Activated naive CD4-positive, alpha-beta T cell treated with anti-CD3 and anti-CD28 coated beads for 36 hours (primary cell): ENCODE measurements at regions of chr6 and their contacts with region 1.

Region 1: DNA sequence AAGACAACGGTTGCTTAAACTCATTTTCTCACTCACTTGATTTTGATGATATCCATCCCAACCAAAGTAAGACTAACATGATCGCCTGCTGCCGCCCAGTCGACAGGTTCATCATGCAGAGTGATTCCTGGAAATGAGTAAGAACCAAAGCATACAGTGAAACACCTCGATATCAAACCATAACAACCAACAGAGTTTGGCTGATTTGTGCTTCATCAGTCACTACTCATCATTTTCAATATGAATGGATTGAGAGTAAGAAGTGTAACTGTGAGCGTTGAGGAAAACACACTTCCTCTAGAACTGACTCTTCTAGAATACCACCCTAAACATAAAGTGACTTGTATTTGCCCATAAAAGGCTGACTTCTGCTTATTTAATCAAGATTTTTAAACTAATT is 29.2 kb upstream of the ALDH8A1 start:
- DNase-seq: peak; percentile 72
- H3K4me3 Mint-ChIP-seq: no peak overlapping the region
- H3K27ac Mint-ChIP-seq: peak overlapping the region; percentile 33
- H3K4me1 Mint-ChIP-seq: peaks cover 42% of the 10 kb centered on the region
- H3K27me3 Mint-ChIP-seq: no peaks in the 10 kb centered on the region

Region 2: GRCh38 chr6:135021310-135022049 is 42.3 kb after region 1 on chr6:
- CTCF ChIA-PET with region 1: no interaction called
- intact Hi-C with region 1: loop called (anchors 1 kb)
- DNase-seq: no peak
- H3K4me3 Mint-ChIP-seq: no peak overlapping the region
- H3K27ac Mint-ChIP-seq: no peak overlapping the region
- H3K4me1 Mint-ChIP-seq: peaks cover 61% of the 10 kb centered on the region
- H3K27me3 Mint-ChIP-seq: no peaks in the 10 kb centered on the region

Region 3: DNA sequence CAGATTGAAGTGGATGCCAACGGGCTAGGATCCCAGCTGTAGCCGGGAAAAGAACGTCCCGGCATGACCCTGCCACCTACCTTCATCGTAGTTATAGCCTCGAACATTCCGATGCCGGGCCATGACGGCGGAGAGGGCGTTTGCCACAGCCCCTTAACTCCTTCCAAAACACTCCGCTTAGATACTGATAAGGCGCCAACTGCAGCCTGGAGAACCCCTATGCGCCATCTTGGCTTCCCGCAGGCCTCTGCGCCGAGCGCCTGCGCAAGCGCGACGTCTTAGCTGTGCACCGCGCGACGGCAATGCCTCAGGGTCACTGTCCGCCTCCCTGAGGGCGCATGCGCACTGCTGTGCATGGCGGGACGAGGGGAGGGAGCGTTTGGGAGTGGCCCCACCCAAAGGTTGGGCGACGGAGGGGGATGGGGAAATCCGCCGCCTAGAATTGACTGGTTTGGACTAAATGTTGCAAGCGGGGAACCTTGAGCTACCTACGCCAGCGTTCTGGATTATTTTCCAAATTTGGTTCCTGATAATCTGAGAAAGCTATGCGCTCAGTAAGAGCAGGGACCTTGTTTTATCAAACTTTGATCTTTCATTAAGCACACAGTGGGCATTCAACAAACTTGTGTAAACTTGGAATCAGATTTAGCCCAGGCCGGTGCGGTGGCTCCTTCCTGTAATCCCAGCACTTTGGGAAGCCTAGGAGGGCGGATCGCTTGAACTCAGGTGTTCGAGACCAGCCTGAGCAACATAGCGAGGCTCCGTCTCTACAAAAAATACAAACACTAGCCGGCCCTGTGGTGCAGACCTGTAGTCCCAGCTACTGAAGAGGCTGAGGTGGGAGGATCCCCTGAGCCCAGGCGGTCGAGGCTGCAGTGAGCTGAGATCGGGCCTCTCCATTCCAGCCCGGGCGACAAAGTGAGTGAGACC is 75.7 kb after region 1 on chr6 and contains the start of gene HBS1L:
- CTCF ChIA-PET with region 1: no interaction called
- intact Hi-C with region 1: loop called (anchors 1 kb)
- DNase-seq: peak; percentile 98
- H3K4me3 Mint-ChIP-seq: peak within 1 kb of the TSS; percentile 90
- H3K27ac Mint-ChIP-seq: peak within 1 kb of the TSS; percentile 96
- H3K4me1 Mint-ChIP-seq: peaks cover 23% of the 10 kb centered on the region
- H3K27me3 Mint-ChIP-seq: no peaks in the 10 kb centered on the region
- total RNA-seq, gene HBS1L: 150 to 153 TPM

Region 4: DNA sequence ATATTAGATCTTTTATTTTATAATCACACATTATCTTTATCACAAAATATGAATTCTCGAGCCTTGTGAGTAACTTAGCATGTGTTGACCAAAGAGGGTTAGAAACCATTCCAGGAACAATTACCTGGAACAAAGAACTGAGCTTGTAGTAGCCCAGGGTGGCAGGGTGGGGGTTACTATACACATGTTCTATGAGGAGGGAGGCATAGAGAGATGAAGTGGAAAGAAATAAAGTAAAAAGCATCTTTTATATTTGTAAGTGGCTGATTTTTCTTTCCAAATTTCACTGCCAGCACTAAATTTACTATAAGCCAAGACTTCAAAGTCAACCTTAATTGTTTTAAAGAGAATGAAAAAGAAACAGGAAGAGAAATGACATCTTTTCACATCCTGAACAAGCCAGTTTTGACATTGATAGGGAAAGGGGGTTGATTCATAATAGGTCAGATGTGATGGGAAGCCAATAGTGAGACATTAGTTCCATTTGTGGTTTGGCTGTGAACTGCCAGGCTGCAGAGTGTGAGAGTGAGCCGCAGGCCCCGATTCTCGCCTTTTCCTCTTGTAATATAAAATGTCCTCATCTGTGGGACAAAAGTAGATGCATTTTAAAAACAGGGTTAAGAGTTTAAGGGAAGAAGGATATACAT is 149.2 kb after region 1 on chr6:
- CTCF ChIA-PET with region 1: no interaction called
- intact Hi-C with region 1: loop called (anchors 1 kb)
- DNase-seq: peak; percentile 83
- H3K4me3 Mint-ChIP-seq: peak overlapping the region; percentile 26
- H3K27ac Mint-ChIP-seq: peak overlapping the region; percentile 74
- H3K4me1 Mint-ChIP-seq: peaks cover 43% of the 10 kb centered on the region
- H3K27me3 Mint-ChIP-seq: no peaks in the 10 kb centered on the region

Region 5: GRCh38 chr6:135162678-135163439 is 183.7 kb after region 1 on chr6:
- CTCF ChIA-PET with region 1: no interaction called
- intact Hi-C with region 1: loop called (anchors 1 kb)
- DNase-seq: peak; percentile 56
- H3K4me3 Mint-ChIP-seq: no peak overlapping the region
- H3K27ac Mint-ChIP-seq: peak overlapping the region; percentile 77
- H3K4me1 Mint-ChIP-seq: peaks cover 58% of the 10 kb centered on the region
- H3K27me3 Mint-ChIP-seq: no peaks in the 10 kb centered on the region

Region 6: DNA sequence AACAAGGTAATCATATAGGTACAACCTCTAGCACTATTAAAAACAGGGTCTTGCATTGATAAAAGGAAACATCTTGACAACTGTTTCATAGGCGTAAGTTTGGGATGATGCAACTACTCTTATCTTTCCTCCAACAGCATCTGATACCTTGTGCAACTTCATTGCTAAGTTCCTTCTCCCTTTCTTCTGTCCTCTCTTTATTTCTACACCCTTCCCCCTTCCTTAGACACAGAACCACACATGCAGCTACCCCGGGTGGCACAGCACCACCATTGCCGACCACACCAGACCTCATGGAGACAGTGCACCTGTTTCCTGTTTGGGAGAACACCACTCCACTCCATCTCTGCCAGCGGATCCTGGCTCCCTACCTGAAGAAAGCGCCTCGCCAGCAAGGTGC is 216.4 kb after region 1 on chr6:
- CTCF ChIA-PET with region 1: no interaction called
- intact Hi-C with region 1: loop called (anchors 1 kb)
- DNase-seq: no peak
- H3K4me3 Mint-ChIP-seq: no peak overlapping the region
- H3K27ac Mint-ChIP-seq: no peak overlapping the region
- H3K4me1 Mint-ChIP-seq: peaks cover 19% of the 10 kb centered on the region
- H3K27me3 Mint-ChIP-seq: no peaks in the 10 kb centered on the region

Region 7: DNA sequence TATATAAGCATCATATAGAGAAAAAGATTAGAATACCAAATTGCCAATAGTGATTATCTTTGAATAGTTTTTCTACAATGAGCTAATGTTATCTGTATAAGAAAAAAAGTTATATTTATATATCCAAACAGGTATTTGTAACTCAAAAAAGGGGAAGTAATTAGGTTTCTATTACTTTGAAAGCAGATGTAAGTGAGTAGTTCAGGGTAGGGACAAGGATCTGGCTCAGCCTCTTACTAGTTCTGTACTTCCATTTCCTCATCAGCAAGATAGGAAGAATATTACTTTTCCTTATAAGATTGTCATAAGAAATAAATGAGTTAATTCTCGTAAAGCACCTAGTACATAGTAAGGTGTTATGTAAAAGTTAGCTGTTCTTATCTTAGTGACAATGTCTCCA is 486.2 kb after region 1 on chr6:
- CTCF ChIA-PET with region 1: no interaction called
- intact Hi-C with region 1: no loop called
- DNase-seq: no peak
- H3K4me3 Mint-ChIP-seq: no peak overlapping the region
- H3K27ac Mint-ChIP-seq: no peak overlapping the region
- H3K4me1 Mint-ChIP-seq: peaks cover 5% of the 10 kb centered on the region
- H3K27me3 Mint-ChIP-seq: no peaks in the 10 kb centered on the region